Right ventricle myocardium superior (tissue), 1 donor: ENCODE measurements at regions of chr4 and their contacts with region 1.

Region 1: GRCh38 chr4:11976726-11977263 is 548.1 kb upstream of the HS3ST1 start:
- DNase-seq: no peak
- ATAC-seq: no peak

Region 2: GRCh38 chr4:12036450-12036849 is 59.7 kb after region 1 on chr4:
- intact Hi-C with region 1: loop called (anchors 2 kb)
- DNase-seq: no peak
- ATAC-seq: no peak